ENCODE measurements at regions of chr17 and their contacts with region 1.

Region 1: DNA sequence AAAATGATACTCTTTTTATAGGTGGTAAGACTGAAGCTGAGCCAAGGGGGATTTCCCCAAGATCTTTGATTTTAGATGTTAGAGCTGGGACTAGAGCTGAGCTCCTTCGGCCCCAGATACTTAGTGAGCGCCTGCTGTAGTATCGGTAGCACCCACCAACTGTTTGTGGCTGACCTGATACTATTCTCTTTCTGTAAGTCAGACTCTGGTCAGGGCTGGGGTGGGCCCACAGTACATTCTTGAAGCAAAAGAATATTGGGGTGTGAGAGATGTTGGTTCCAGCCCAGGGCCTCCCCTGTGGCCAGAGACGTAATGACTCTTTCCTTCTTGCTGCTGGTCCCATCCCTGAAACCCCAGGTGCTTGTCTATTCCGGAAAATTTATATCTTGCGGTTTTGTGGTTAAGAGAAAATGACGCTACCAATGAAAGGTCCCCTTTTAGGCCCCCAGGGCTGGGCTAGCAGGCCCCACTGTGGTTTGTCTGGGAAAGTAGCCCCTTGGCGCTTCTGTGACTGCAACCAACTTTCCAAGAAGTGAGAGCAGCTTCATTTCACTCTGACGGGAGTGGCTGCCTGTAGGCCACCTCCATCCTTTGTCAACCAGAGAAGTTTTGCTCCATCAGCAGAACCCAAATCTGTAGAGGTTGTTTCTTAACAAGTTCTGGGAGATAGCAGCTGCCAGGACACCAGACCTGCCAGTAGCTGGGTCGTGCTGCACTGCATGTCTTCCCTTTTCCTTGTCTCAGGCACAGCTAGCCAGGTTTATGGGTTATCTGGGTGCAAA is 86.4 kb upstream of the LGALS9 start:
- DNase-seq: peak; percentile 96
- ATAC-seq: peak; percentile 86
- H3K4me3 Mint-ChIP-seq: peak overlapping the region; percentile 67
- H3K27ac Mint-ChIP-seq: peak overlapping the region; percentile 89
- H3K4me1 Mint-ChIP-seq: peaks cover 65% of the 10 kb centered on the region
- H3K27me3 Mint-ChIP-seq: peaks cover 2% of the 10 kb centered on the region
- CTCF ChIP-seq: no peak

Region 2: GRCh38 chr17:27466743-27467375 is 77.7 kb before region 1 on chr17:
- CTCF ChIA-PET with region 1: interaction called, 29 read pairs
- POLR2A ChIA-PET with region 1: interaction called, 63 read pairs
- intact Hi-C with region 1: loop called (anchors 2 kb)
- DNase-seq: peak; percentile 92
- ATAC-seq: peak; percentile 84
- H3K4me3 Mint-ChIP-seq: peak overlapping the region; percentile 67
- H3K27ac Mint-ChIP-seq: peak overlapping the region; percentile 96
- H3K4me1 Mint-ChIP-seq: peaks cover 85% of the 10 kb centered on the region
- H3K27me3 Mint-ChIP-seq: no peaks in the 10 kb centered on the region
- CTCF ChIP-seq: no peak

Region 3: DNA sequence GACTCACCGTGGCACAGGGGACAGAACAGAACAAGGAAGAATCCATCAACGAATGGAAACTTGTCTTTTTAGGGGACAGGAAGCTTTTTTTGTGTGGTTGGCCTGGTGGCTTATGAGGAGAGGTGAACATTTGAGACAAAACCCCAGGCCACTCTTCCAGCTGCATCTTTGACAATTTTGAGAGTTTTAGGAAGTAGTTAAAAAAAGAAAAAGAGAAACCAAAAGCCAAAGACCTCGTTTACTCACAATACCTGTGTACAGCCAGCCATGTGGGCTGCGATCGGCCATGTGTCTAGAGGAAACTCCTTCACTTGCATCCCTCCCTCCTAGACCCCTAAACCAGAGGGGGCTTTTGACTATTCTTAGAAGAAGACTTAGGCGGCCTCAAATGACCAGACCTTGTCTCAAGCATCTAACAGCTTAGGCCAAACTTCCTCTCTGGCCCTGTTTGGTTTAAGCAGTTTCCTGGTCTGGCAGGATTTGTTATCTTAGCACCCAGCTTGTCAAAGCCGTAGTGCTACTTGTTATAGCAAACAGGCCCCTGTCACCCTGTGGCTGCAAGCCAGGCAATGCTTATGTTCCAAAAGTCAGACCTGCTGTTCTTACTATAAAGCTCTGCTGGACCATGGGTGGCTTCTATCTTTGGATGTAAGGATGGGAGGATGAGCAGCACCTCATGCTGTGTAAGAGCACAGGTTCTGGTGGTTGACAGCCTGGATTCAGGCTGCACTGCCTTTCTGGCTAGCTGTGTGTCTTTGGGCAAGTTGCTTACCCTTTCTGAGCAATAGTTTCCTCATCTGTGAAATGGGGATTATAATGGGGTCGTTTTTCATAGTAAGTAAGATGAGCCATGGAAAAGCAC is 70.6 kb before region 1 on chr17:
- CTCF ChIA-PET with region 1: interaction called, 29 read pairs
- POLR2A ChIA-PET with region 1: interaction called, 63 read pairs
- intact Hi-C with region 1: loop called (anchors 2 kb)
- DNase-seq: peak; percentile 94
- ATAC-seq: peak; percentile 35
- H3K4me3 Mint-ChIP-seq: peak overlapping the region; percentile 40
- H3K27ac Mint-ChIP-seq: peak overlapping the region; percentile 100
- H3K4me1 Mint-ChIP-seq: peaks cover 86% of the 10 kb centered on the region
- H3K27me3 Mint-ChIP-seq: no peaks in the 10 kb centered on the region
- CTCF ChIP-seq: no peak

Region 4: DNA sequence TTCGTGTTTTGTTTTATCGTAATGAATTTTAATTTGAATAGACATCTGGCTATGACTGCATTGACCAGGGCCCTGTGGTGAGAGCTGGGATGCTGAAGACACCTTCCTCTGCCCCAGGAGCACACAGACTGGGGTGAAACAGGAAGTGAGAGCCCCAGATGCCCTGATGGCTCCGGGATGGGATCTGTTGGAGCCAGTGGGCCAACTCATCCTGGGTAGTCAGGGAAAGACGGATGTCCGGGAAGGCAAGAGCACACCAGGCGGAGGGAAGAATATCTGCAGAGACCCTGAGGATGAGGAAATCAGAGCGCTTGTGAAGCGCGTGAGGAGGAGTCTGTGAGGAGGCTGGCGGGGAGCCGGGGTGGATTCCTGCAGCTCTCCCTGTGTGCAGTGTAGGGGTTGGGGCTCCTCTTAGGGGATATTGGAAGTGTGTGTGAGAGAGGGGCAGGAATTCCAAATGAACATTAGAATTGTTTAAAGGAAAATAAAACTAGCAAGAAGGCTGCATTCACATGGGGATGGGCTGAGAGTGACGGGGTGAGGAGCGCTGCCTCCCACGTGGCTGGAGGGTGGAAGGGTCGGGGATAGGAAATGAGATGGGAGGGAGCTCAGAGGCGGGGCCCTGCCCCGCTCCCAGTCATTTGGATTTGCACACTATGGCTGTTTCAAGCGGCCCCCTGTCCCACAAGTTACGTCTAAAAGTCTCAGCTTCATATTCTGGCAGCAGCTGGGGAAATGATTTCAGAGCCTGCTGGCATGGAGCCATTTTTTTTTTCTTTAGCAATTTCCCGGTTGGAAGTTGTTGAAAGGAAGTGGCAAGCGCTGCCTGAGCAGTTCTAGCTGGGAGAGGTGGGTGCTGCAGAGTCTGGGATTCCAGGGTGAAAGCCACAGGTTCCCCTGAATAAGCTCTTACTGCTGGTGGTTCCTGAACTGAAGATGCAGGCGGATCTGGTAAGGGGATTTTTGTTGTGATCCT is 15.3 kb after region 1 on chr17:
- CTCF ChIA-PET with region 1: interaction called, 29 read pairs
- POLR2A ChIA-PET with region 1: interaction called, 43 read pairs
- intact Hi-C with region 1: no loop called
- DNase-seq: no peak
- ATAC-seq: no peak
- H3K4me3 Mint-ChIP-seq: no peak overlapping the region
- H3K27ac Mint-ChIP-seq: no peak overlapping the region
- H3K4me1 Mint-ChIP-seq: peaks cover 24% of the 10 kb centered on the region
- H3K27me3 Mint-ChIP-seq: no peaks in the 10 kb centered on the region
- CTCF ChIP-seq: no peak

Region 5: GRCh38 chr17:27569257-27569722 is 24.7 kb after region 1 on chr17:
- CTCF ChIA-PET with region 1: interaction called, 29 read pairs
- POLR2A ChIA-PET with region 1: interaction called, 43 read pairs
- intact Hi-C with region 1: no loop called
- DNase-seq: peak; percentile 87
- ATAC-seq: peak; percentile 72
- H3K4me3 Mint-ChIP-seq: no peak overlapping the region
- H3K27ac Mint-ChIP-seq: peak overlapping the region; percentile 69
- H3K4me1 Mint-ChIP-seq: peaks cover 76% of the 10 kb centered on the region
- H3K27me3 Mint-ChIP-seq: no peaks in the 10 kb centered on the region
- CTCF ChIP-seq: peak; percentile 75

Region 6: DNA sequence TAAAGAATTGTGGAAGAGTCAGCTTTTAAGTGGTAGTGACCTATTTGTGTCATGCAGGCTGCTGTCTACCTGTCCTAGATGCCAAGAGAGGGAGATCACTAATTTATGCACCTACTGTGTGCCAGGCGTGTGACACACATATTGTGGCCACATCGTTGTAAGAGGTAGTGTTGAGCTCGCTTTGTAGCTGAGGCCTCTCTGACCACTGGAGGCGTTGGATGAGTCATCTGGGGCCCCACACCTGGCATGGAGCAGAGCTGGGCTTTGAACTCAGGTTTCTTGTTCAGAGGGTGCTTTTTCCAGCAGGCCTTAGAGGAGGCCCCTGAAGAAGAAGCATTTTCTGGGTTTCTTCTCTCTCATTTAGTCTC is 34.2 kb after region 1 on chr17:
- CTCF ChIA-PET with region 1: interaction called, 5 read pairs
- POLR2A ChIA-PET with region 1: interaction called, 9 read pairs
- intact Hi-C with region 1: loop called (anchors 2 kb)
- DNase-seq: peak; percentile 92
- ATAC-seq: peak; percentile 78
- H3K4me3 Mint-ChIP-seq: peak overlapping the region; percentile 40
- H3K27ac Mint-ChIP-seq: peak overlapping the region; percentile 87
- H3K4me1 Mint-ChIP-seq: peaks cover 64% of the 10 kb centered on the region
- H3K27me3 Mint-ChIP-seq: no peaks in the 10 kb centered on the region
- CTCF ChIP-seq: no peak